ENCODE measurements at regions of chr15 and their contacts with region 1.

Region 1: DNA sequence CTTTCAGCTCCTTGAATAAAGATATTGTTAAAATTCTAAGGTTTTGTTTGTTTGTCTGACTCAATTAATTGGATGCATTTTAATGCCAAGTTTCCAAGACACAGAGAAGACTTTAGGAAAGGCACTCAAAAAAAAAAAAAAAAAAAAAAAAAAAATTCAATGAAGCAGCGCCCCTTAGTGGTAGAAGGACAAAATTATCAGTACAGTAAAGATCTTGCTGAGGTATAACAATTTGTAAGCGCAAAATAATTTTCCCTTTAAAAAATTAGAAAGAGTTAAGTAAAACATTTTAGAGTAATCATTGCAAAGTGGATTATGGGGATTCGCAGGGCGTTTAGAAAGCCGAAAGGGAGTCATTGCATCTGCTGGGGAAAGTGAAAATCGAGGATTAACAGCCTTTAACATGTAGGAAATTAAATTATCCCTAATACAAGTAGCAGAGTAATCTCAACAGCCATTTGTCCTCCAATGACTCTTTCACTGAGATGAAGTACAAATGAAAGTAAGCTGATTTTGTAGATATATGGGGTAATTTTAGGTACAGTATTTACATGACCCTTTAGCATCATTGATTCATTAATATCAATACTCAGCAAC is 5.8 kb upstream of the DIS3L start:
- DNase-seq: no peak
- H3K4me3 ChIP-seq: no peak overlapping the region
- H3K27ac ChIP-seq: no peak overlapping the region
- H3K4me1 ChIP-seq: peaks cover 3 to 5% of the 10 kb centered on the region in 2 donors
- H3K27me3 ChIP-seq: no peaks in the 10 kb centered on the region
- CTCF ChIP-seq: peak; percentile 23 to 72 (median 58)
- POLR2A ChIP-seq: no peak

Region 2: GRCh38 chr15:65980824-65981456 is 306.6 kb before region 1 on chr15:
- intact Hi-C with region 1: loop called in 1 of 2 experiments (anchors 10 kb)
- DNase-seq: peak; percentile 55 to 87 (median 70)
- H3K4me3 ChIP-seq: no peak overlapping the region
- H3K27ac ChIP-seq: no peak overlapping the region
- H3K4me1 ChIP-seq: no peaks in the 10 kb centered on the region
- H3K27me3 ChIP-seq: peaks cover 8% of the 10 kb centered on the region
- CTCF ChIP-seq: peak; percentile 65 to 84 (median 77)
- POLR2A ChIP-seq: no peak

Region 3: GRCh38 chr15:66172324-66172980 is 115.1 kb before region 1 on chr15:
- intact Hi-C with region 1: no loop called
- DNase-seq: no peak
- H3K4me3 ChIP-seq: no peak overlapping the region
- H3K27ac ChIP-seq: no peak overlapping the region
- H3K4me1 ChIP-seq: no peaks in the 10 kb centered on the region
- H3K27me3 ChIP-seq: no peaks in the 10 kb centered on the region
- CTCF ChIP-seq: no peak
- POLR2A ChIP-seq: no peak

Region 4: DNA sequence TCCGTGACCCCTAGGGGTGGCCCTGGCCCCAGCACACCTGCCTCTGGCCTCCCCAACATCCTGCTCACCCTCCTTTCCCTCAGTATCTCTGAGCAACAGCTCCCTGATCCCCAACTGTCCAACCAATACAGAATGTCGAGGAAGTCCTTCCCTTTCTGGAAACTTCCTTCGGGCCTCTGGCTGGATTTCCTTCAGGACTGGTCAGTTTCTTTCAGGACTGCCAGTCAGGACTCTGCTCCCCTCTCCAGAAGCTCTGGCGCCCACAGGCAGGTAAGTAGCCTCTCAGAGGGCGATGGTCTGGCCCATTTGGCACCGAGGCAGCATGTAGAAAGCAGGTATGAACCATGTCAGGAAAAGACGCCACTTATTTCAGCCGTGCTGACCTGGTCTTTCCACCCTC is 85.0 kb before region 1 on chr15:
- intact Hi-C with region 1: no loop called
- DNase-seq: no peak
- H3K4me3 ChIP-seq: no peak overlapping the region
- H3K27ac ChIP-seq: no peak overlapping the region
- H3K4me1 ChIP-seq: no peaks in the 10 kb centered on the region
- H3K27me3 ChIP-seq: no peaks in the 10 kb centered on the region
- CTCF ChIP-seq: no peak
- POLR2A ChIP-seq: no peak

Region 5: DNA sequence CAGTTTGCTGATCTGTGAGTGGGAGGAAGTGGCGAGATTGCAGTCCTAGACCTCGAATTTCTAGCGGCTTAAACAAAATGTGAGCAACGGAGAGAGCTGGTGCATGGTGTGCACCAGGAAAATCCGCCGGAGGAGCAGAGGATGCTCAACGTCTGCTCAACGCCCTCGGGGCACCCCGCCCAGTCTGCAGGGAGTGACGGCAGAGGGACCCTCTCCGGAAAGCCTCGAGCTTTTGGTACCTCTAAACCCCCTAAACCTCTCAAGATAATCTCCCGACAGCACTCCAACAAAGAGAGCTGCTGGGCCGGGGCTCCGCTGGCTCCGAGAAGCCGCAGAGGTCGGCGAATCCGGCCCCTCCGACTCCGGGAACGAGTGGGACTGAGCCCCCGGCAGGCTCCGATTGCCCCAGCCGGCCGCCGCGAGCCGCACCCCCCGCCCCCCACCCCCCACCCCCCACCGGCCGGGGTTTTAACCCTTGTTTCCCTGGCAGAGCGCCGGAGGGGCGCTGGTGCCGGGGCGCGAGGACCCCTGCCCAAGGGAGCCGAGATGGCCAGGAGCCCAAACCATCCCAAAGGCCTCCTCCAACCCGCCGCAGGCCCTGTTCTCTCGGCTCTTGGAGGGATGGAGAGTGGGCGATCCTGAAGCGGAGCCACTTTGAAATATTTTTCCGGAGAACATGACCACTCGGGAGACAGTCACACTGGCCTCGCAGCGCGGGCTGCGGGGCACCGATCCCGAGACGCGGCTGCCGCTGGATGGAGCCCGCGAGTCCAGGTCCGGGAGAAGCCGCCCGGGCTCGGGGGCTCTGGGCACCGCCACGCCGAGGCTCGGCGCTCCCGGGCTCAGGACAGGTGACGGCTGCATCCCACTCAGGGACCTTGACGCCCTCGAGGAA is 35.5 kb before region 1 on chr15:
- intact Hi-C with region 1: loop called in 1 of 2 experiments (anchors 2 kb)
- DNase-seq: peak; percentile 35 to 73 (median 64)
- H3K4me3 ChIP-seq: peak overlapping the region in 2 of 4 donors; percentile 30 to 69
- H3K27ac ChIP-seq: no peak overlapping the region
- H3K4me1 ChIP-seq: peaks cover 15 to 28% of the 10 kb centered on the region in 2 donors
- H3K27me3 ChIP-seq: peaks cover 21% of the 10 kb centered on the region
- CTCF ChIP-seq: peak; percentile 46 to 70 (median 58)
- POLR2A ChIP-seq: no peak

Region 6: GRCh38 chr15:66369773-66370651 is 82.5 kb after region 1 on chr15:
- intact Hi-C with region 1: no loop called
- DNase-seq: peak in 1 of 7 donors; percentile 17
- H3K4me3 ChIP-seq: peak overlapping the region in 2 of 4 donors; percentile 11 to 61
- H3K27ac ChIP-seq: peak overlapping the region; percentile 8 to 93 (median 52)
- H3K4me1 ChIP-seq: peaks cover 3 to 5% of the 10 kb centered on the region in 2 donors
- H3K27me3 ChIP-seq: no peaks in the 10 kb centered on the region
- CTCF ChIP-seq: no peak
- POLR2A ChIP-seq: no peak

Region 7: DNA sequence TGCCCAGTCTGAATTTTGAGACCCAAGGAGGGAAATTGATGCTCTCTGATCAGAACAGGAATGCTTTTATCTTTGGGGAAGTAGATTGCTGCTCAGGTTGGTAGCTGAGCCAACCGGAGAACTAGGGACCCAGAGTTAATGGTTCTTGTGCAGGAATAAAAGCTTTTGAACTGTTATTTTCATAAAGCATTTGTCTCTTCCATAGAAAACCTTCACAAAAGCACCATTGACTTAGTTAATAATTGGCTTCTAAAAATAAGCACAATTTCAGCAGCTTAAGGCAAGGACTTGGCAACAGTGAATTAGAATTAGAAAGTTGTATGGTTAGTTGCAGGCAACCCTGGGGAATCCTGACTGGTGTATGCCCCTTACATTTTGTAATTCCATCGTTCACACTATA is 152.9 kb after region 1 on chr15:
- intact Hi-C with region 1: no loop called
- DNase-seq: no peak
- H3K4me3 ChIP-seq: no peak overlapping the region
- H3K27ac ChIP-seq: no peak overlapping the region
- H3K4me1 ChIP-seq: no peaks in the 10 kb centered on the region
- H3K27me3 ChIP-seq: no peaks in the 10 kb centered on the region
- CTCF ChIP-seq: no peak
- POLR2A ChIP-seq: no peak

Measured in adrenal gland (tissue), 19 donors.